Spleen (tissue), 13 donors: ENCODE measurements at regions of chr6 and their contacts with region 1.

Region 1: DNA sequence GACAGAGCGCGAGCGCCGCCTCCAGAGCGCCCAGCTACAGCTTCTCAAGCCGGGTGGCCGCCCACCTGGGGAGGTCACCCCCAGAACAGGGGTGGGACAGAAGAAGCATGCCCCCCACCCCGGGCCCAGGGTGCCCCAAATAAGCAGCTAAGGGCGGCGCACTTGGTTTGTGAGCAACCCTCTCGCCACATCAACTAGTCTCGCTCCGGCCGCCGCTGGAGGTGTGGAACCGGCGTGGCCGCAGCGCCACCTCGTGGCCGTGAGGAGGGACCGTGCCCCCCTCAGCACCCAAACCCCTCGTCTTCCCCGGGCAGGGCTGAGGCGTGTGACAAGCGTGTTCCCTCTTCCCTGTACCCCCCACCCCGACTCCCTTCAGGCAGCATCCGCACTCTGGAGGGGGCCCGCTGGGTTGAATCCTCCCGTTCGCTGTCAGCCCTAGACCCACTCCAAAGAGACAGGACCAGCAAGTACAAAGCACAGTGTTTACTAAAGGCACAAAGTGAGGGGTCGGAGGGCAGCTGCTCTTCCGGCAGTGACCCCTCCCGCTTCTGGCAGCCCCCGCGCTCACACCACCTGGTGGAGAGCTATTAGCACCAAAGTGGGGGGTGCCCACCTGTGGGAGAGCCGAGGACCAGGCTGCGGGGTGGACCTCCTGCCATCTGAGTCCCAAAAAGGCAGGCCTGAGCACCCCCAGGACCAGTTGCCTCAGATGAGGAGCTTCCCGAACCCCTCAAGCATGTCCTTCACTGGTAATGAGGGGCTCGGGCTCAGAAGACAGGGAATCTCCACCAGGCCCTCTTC is 45.4 kb downstream of the MDFI start:
- DNase-seq: peak; percentile 97
- H3K4me3 ChIP-seq: peak overlapping the region; percentile 8 to 68 (median 39)
- H3K27ac ChIP-seq: peak overlapping the region; percentile 65 to 87 (median 79)
- H3K4me1 ChIP-seq: peaks cover 14 to 31% (median 26%) of the 10 kb centered on the region in 6 donors
- H3K27me3 ChIP-seq: peaks cover 0 to 5% (median 0%) of the 10 kb centered on the region in 7 donors
- CTCF ChIP-seq: peak; percentile 78 to 96 (median 92)
- POLR2A ChIP-seq: no peak

Region 2: GRCh38 chr6:41367700-41368099 is 316.0 kb before region 1 on chr6:
- intact Hi-C with region 1: loop called (anchors 5 kb)
- DNase-seq: no peak
- H3K4me3 ChIP-seq: no peak overlapping the region
- H3K27ac ChIP-seq: no peak overlapping the region
- H3K4me1 ChIP-seq: peaks cover 9 to 28% (median 22%) of the 10 kb centered on the region in 6 donors
- H3K27me3 ChIP-seq: peaks cover 2 to 92% (median 44%) of the 10 kb centered on the region in 7 donors
- CTCF ChIP-seq: peak in 4 of 11 experiments; percentile 11 to 17 (median 16)
- POLR2A ChIP-seq: no peak

Region 3: GRCh38 chr6:41531591-41532582 is 151.8 kb before region 1 on chr6:
- intact Hi-C with region 1: no loop called
- DNase-seq: peak; percentile 83
- H3K4me3 ChIP-seq: peak overlapping the region in 5 of 8 donors; percentile 4 to 51 (median 10)
- H3K27ac ChIP-seq: peak overlapping the region in 7 of 8 donors; percentile 19 to 83 (median 62)
- H3K4me1 ChIP-seq: peaks cover 12 to 52% (median 24%) of the 10 kb centered on the region in 6 donors
- H3K27me3 ChIP-seq: peaks cover 0 to 28% (median 0%) of the 10 kb centered on the region in 7 donors
- CTCF ChIP-seq: no peak
- POLR2A ChIP-seq: no peak

Region 4: DNA sequence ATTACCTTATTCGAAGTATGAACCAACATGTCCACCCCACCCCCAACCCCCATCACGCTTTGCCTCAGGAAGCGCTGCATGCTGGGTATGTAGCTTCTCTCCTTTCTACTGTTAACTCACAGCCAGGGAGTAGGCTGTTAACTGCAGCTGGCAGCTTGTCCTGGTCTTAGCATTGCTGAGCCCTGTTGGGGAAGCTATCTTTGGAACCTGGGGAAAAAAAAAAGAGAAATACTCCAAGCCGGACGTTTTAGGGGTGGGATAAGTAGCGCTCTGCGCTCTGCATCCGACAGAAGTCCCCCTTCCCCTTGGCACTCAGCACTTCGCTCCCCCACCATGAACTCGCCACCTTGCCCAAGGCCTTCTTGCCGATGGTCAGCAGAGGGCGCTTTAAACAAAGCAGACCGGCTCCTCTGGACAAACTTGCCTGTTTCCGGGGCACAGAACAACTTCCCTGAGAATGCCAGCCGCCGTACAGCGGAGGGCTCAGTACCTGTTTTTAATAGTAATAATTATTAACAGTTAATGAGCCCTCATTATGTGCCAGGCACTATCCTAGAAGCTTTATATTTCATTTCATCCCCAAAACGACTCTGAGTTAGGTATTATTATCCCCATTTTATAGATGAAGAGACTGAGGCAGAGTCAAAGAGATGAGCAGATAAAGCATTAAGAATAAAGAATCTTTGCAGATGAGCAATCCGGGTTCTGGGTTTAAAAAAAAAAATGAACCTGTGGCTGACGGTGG is 80.7 kb before region 1 on chr6:
- intact Hi-C with region 1: loop called (anchors 2 kb)
- DNase-seq: peak; percentile 90
- H3K4me3 ChIP-seq: no peak overlapping the region
- H3K27ac ChIP-seq: no peak overlapping the region
- H3K4me1 ChIP-seq: peaks cover 0 to 12% (median 10%) of the 10 kb centered on the region in 6 donors
- H3K27me3 ChIP-seq: peaks cover 0 to 20% (median 0%) of the 10 kb centered on the region in 7 donors
- CTCF ChIP-seq: peak; percentile 67 to 95 (median 85)
- POLR2A ChIP-seq: no peak

Region 5: DNA sequence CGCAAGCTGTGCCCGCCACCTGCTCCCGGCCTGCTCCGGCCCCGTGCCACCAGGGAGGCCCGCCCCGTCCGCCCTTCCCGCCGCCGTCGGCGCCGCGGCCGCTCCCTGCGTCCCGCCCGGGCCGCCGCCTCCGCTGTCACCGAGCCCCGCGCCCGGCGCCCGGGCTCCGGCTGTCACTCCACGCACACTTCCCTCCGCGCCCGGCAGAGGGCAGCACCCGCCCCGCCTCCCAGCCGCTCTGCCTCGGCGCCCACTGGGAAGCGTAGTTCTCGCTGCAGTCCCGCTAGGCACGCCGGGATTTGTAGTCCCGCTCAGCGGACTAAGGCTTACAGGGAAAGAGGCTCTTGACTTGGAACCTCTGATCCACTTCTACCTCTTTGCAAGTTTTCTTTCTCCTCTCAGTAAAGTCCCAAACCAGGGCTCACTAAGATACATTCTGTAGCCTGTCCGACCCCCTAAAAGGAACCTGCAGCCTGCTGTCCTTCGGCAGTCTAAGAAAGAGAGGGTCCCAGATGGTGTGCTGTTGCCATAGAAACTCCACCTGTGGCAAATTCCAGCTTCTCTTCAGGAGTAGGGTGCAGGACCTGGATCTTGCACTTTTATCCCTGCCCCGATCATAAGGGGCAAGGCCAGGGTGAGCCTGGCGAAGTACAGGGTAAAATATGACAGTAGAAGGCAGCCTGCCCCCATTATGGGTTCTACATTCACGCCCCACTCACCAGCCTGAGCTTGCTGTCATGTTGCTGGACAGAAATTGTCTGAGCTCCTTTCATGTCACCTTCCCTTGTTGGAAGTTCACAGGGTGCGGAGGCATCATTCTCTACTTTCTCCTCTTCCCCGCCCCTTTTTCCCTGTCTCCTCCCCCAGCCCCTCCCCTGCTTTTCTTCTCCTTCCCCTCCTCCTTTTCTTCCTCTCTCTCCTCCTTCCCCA is 52.0 kb after region 1 on chr6 and contains the start of gene TFEB:
- intact Hi-C with region 1: loop called (anchors 10 kb)
- DNase-seq: peak; percentile 99
- H3K4me3 ChIP-seq: peak within 1 kb of the TSS; percentile 78 to 98 (median 94)
- H3K27ac ChIP-seq: peak within 1 kb of the TSS; percentile 82 to 100 (median 98)
- H3K4me1 ChIP-seq: peaks cover 21 to 43% (median 39%) of the 10 kb centered on the region in 6 donors
- H3K27me3 ChIP-seq: no peaks in the 10 kb centered on the region
- CTCF ChIP-seq: peak; percentile 91 to 99 (median 96)
- POLR2A ChIP-seq: peak in 1 of 3 donors; percentile 25
- total RNA-seq, gene TFEB: 55.9 to 80.8 (median 75.3) TPM

Region 6: GRCh38 chr6:41824571-41825569 is 141.2 kb after region 1 on chr6:
- intact Hi-C with region 1: no loop called
- DNase-seq: no peak
- H3K4me3 ChIP-seq: no peak overlapping the region
- H3K27ac ChIP-seq: no peak overlapping the region
- H3K4me1 ChIP-seq: peaks cover 0 to 5% (median 0%) of the 10 kb centered on the region in 6 donors
- H3K27me3 ChIP-seq: no peaks in the 10 kb centered on the region
- CTCF ChIP-seq: no peak
- POLR2A ChIP-seq: no peak